Left cardiac atrium (tissue), 4 donors: ENCODE measurements at regions of chr3 and their contacts with region 1.

Region 1: GRCh38 chr3:192444096-192444790 is 283.1 kb downstream of the FGF12 start:
- DNase-seq: peak; percentile 55
- ATAC-seq: peak; percentile 80 to 89

Region 2: GRCh38 chr3:191412759-191413158 is 1031.5 kb before region 1 on chr3:
- intact Hi-C with region 1: loop called in 1 of 2 experiments (anchors 10 kb)
- DNase-seq: no peak
- ATAC-seq: no peak

Region 3: DNA sequence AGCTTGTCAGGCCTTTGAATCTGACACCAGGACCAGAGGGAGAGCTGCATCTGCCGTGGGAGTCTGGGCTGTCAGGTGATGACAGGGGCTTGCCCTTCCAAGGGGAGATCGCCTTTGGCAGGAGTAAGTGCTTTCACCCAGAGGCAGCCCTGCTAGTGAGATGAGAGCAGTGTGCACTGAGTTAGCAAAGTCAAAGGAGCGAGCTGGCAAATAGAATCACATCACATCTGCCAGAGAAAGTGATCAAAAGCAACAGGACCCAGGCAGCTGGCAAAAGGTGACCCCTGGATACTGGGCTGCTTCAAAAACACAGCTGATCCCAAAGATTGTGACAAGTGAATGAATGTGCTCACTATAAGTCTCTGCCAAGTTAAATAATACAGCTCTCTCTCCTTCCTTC is 1019.4 kb before region 1 on chr3:
- intact Hi-C with region 1: loop called in 1 of 2 experiments (anchors 5 kb)
- DNase-seq: no peak
- ATAC-seq: peak in 1 of 2 donors; percentile 44